Motor neuron (in vitro differentiated cells): ENCODE measurements at regions of chr13 and their contacts with region 1.

Region 1: DNA sequence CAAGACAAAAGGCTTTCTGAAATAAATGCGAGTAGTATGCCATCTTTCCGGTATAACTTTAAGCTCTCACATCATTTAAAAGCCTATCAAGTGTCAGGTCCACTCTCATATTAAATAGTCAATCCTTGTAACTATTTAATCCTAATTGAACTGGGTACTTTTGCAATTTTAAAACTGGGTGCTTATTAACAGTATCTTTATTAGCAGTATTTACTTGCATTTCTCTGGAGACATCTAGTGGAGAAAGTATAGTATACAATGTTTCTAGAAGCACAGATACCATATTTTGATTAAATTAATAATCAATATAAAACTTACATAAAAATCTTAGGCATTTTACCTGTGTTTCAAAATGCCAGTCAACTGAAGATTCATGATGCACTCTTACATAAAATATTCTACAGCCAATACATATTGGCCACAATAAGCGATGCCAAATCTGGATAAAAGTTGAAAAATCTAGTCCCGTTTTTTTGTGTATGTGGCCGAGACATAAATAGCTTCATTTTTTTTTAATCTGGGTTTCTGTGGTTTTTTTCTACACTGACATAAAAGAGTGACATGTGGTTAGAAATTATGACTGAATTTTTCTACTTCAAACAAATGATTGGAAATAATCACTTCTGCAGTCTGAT is 4.3 kb upstream of the POSTN start:
- ATAC-seq: peak in 3 of 8 experiments; percentile 19 to 30 (median 25)
- H3K4me3 ChIP-seq: no peak overlapping the region
- H3K27ac ChIP-seq: no peak overlapping the region
- H3K4me1 ChIP-seq: peaks cover 9 to 33% of the 10 kb centered on the region in 2 donors

Region 2: DNA sequence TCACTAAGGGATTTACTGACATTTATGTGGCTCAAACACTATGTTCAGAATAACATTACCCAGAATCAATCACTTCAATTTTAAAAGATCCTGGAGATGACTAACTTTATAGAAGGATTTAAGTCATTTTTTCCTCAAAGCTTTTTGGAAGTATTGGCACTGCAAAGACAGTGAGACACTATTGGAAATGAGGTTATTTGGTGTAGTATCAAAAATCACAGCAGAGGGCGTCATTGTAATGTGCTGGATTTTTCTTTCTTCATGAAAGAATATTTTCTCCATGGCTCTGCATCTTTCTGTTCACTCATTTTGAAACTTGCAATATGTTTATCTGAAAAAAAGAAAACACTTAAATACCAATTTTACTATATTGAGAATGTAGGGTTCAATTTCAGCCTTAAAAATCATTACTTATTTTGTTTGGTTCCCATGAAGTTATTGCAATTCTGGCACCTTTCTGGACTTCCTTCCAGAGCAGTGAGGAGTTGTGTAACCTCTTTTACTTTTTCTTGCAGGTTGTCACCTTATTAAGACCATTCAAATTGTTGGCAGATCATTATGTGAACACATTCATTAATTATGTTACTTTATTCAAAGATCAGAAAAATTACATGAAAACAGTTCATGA is 493.7 kb before region 1 on chr13:
- in situ Hi-C with region 1: loop called in 5 of 9 experiments (anchors 10 to 25 kb)
- ATAC-seq: peak in 4 of 8 experiments; percentile 32 to 43 (median 36)
- H3K4me3 ChIP-seq: no peak overlapping the region
- H3K27ac ChIP-seq: no peak overlapping the region
- H3K4me1 ChIP-seq: no peaks in the 10 kb centered on the region

Region 3: DNA sequence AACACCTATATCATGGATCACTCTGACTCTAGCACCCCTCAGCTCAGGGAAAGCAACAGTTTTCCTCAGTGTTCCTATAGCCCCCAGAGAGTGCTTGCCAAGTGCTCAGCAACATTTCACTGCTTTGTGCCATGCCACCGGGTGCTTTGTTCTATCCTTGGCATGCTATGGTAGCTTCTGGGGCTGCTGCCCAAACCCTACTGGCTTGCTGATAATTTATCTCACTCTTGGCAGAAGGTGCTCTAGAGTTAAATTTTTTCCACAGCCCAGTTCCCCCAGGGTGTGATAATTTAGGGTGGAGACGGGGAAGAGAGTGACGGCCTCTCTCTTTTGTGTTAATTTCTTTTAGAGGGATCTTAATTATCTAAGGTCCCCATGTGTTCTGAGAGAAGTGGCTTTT is 484.8 kb before region 1 on chr13:
- in situ Hi-C with region 1: loop called in 4 of 9 experiments (anchors 10 to 25 kb)
- ATAC-seq: no peak
- H3K4me3 ChIP-seq: no peak overlapping the region
- H3K27ac ChIP-seq: no peak overlapping the region
- H3K4me1 ChIP-seq: no peaks in the 10 kb centered on the region

Region 4: DNA sequence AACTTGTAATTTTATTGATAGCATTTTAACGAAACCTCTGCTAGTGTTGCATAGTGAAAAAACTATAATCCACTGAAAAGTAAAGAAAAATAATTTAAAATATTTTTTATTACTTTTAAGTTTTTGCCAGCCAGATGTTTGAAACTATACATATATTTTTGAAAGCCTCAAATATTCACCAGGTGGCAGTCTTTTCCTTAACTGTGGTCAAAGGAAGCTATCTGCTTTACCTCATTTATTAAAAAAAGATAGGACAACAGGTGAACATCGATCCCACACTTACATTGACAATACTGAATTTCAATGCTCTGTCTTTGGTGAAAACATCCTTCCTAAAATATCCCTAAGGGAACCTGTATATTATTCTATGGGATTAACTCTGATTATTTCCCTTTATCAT is 166.2 kb after region 1 on chr13:
- in situ Hi-C with region 1: no loop called
- ATAC-seq: no peak
- H3K4me3 ChIP-seq: no peak overlapping the region
- H3K27ac ChIP-seq: no peak overlapping the region
- H3K4me1 ChIP-seq: no peaks in the 10 kb centered on the region

Region 5: GRCh38 chr13:37888916-37889501 is 286.1 kb after region 1 on chr13:
- in situ Hi-C with region 1: no loop called
- ATAC-seq: peak in 1 of 8 experiments; percentile 51
- H3K4me3 ChIP-seq: no peak overlapping the region
- H3K27ac ChIP-seq: no peak overlapping the region
- H3K4me1 ChIP-seq: no peaks in the 10 kb centered on the region